ENCODE measurements at regions of chr10 and their contacts with region 1.

Region 1: GRCh38 chr10:4813023-4813422 is 13.0 kb upstream of the AKR1E2 start:
- DNase-seq: peak; percentile 30
- ATAC-seq: peak; percentile 80; the same call in 1 of the 2 replicates
- H3K4me3 ChIP-seq: no peak overlapping the region
- H3K27ac ChIP-seq: peak overlapping the region; percentile 67
- H3K4me1 ChIP-seq: peaks cover 7% of the 10 kb centered on the region
- H3K27me3 ChIP-seq: no peaks in the 10 kb centered on the region
- CTCF ChIP-seq: no peak

Region 2: GRCh38 chr10:4639960-4640359 is 173.1 kb before region 1 on chr10:
- CTCF ChIA-PET with region 1: no interaction called
- POLR2A ChIA-PET with region 1: no interaction called
- in situ Hi-C with region 1: no loop called
- intact Hi-C with region 1: no loop called
- DNase-seq: no peak
- ATAC-seq: no peak
- H3K4me3 ChIP-seq: no peak overlapping the region
- H3K27ac ChIP-seq: no peak overlapping the region
- H3K4me1 ChIP-seq: no peaks in the 10 kb centered on the region
- H3K27me3 ChIP-seq: no peaks in the 10 kb centered on the region
- CTCF ChIP-seq: no peak

Region 3: DNA sequence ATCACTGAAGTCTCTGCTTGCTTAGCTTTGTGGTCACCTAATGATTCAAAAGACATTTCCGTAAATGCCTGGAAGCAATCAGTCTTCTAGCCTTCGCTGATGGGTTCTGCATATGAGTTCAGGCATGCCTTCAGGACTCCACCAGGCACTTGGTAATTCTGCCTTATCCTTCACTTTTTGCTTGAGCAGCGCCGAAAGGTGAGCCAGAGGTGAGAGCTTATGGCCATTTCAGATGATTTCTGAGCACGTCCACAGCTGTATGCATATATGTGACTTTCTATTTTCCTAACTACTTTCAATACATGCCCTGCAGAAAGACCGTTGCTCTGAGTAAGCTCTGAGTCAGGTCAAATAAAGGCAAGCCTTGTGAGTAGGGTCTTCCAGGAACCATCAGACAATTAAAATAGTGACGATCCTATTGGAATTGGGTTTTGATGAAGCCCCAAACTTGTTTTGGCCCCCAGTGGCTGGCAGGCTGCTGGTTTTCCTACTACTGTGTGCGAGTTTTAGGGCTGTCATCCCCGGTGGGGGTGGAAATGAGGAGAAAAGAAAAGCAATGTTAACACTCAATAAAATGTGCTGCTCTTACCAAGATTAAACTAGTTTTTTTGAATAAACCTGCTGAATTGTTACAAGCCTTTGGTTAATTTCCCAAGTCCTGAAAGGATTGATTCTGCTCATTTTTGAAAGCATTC is 141.4 kb before region 1 on chr10:
- CTCF ChIA-PET with region 1: no interaction called
- POLR2A ChIA-PET with region 1: interaction called, 14 read pairs
- in situ Hi-C with region 1: no loop called
- intact Hi-C with region 1: no loop called
- DNase-seq: peak; percentile 80
- ATAC-seq: peak; percentile 97
- H3K4me3 ChIP-seq: peak overlapping the region in 1 of 2 experiments; percentile 35; a peak in 3 of 4 replicates
- H3K27ac ChIP-seq: peak overlapping the region; percentile 100
- H3K4me1 ChIP-seq: peaks cover 14% of the 10 kb centered on the region
- H3K27me3 ChIP-seq: no peaks in the 10 kb centered on the region
- CTCF ChIP-seq: no peak

Region 4: GRCh38 chr10:4775808-4776207 is 37.2 kb before region 1 on chr10:
- CTCF ChIA-PET with region 1: no interaction called
- POLR2A ChIA-PET with region 1: no interaction called
- in situ Hi-C with region 1: no loop called
- intact Hi-C with region 1: no loop called
- DNase-seq: no peak
- ATAC-seq: no peak
- H3K4me3 ChIP-seq: no peak overlapping the region
- H3K27ac ChIP-seq: peak overlapping the region; percentile 12; the same call in 1 of the 2 replicates
- H3K4me1 ChIP-seq: peaks cover 6% of the 10 kb centered on the region
- H3K27me3 ChIP-seq: no peaks in the 10 kb centered on the region
- CTCF ChIP-seq: no peak

Region 5: DNA sequence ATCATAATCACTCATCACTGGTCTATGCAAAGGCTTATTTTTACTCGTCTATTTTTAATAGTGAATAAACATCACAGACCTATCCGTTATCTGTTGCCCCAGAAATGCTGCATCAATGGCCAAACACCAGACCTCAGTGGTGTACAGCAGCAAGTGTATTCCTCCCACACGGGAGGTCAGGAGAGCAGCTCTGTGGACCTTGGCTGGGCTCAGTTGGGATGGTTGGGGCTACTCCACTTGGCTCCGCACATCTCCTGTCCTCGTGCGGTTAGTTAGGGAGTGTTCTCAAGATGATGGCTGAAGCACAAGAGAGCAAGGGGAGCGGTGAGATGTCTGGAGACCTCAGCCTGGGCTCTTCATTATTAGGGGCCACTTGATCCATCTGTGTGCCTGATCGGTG is 15.0 kb after region 1 on chr10:
- CTCF ChIA-PET with region 1: interaction called, 10 read pairs
- POLR2A ChIA-PET with region 1: no interaction called
- in situ Hi-C with region 1: no loop called
- intact Hi-C with region 1: no loop called
- DNase-seq: no peak
- ATAC-seq: no peak
- H3K4me3 ChIP-seq: no peak overlapping the region
- H3K27ac ChIP-seq: no peak overlapping the region
- H3K4me1 ChIP-seq: no peaks in the 10 kb centered on the region
- H3K27me3 ChIP-seq: no peaks in the 10 kb centered on the region
- CTCF ChIP-seq: no peak

Measured in Panc1 (cell line).